CD4-positive, alpha-beta memory T cell (primary cell): ENCODE measurements at regions of chr20 and their contacts with region 1.

Region 1: DNA sequence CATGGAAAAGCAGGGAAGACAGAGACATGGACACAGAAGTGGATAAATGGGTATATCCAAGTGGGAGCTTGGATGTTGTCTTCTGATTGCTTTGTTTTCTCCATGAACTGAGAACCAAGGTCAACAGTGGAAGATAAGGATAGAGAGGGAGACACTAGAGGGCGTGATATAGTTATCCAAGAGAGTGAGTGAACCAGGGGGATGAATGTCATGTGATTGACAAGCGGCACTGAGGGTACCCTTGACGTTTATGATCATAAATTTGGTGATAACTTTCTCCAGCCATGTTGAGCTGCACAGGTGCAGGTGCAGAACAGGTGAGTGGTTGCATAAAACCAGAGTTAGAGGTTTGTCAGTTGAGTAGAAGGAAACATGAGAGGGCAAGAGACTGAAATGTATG is 20.7 kb downstream of the EBF4 start:
- DNase-seq: peak in 4 of 5 donors; percentile 43 to 54 (median 49)
- H3K4me3 ChIP-seq: no peak overlapping the region
- H3K4me3 Mint-ChIP-seq: no peak overlapping the region
- H3K27ac ChIP-seq: no peak overlapping the region
- H3K27ac Mint-ChIP-seq: no peak overlapping the region
- H3K4me1 ChIP-seq: no peaks in the 10 kb centered on the region
- H3K4me1 Mint-ChIP-seq: no peaks in the 10 kb centered on the region
- H3K27me3 ChIP-seq: no peaks in the 10 kb centered on the region
- H3K27me3 Mint-ChIP-seq: no peaks in the 10 kb centered on the region

Region 2: DNA sequence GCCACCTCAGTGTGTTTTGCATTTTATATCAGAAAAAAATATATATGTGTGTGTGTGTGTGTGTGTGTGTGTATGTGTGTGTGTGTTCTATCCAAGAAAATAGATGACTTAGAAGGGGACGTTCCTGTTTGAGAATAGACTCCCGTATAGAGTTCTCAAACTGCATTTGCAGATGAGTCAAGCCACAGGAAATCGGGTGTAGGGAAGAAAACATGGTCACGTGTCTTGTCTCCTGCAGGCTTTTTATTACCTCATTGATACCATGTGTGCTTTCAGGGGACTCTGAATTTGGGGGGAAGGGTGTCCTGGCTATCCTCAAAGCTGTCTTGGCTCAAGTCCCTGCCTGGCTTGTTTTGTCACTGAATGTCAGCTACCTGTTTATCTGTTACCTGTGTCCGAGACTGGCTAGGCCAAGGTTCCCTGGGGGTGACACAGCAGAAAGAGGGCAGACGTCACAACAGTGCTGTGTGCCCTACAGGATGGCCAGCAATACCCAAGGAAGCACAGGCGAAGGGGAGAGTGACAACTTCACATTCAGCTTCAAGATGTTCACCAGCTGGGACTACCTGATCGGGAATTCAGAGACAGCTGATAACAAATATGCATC is 116.5 kb before region 1 on chr20:
- CTCF ChIA-PET with region 1: no interaction called
- POLR2A ChIA-PET with region 1: no interaction called
- intact Hi-C with region 1: no loop called
- DNase-seq: no peak
- H3K4me3 ChIP-seq: no peak overlapping the region
- H3K4me3 Mint-ChIP-seq: no peak overlapping the region
- H3K27ac ChIP-seq: no peak overlapping the region
- H3K27ac Mint-ChIP-seq: no peak overlapping the region
- H3K4me1 ChIP-seq: no peaks in the 10 kb centered on the region
- H3K4me1 Mint-ChIP-seq: no peaks in the 10 kb centered on the region
- H3K27me3 ChIP-seq: peaks cover 4% of the 10 kb centered on the region
- H3K27me3 Mint-ChIP-seq: peaks cover 15 to 32% of the 10 kb centered on the region in 2 donors

Region 3: DNA sequence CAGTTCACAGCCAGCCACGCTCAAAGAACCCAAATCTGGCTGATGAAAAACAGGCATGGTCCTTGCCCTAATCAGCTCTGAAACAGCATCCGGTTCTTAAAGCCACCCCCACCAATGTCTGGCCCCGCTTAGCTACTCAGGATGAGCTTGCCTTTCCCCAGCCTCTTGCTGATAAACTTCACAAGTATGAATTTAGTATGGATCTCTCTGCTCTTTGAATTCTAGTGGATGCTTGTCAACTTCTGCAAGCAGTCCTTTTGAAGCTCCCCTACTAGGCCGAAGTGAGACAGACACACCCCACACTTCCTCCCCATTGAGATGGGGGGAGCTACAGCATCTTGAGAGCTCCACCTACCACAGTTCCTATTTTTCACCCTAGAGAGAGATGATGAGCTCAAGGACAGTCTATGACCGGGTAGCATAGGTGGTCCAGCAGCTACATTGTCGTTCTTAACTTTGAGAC is 16.0 kb after region 1 on chr20:
- CTCF ChIA-PET with region 1: interaction called, 359 read pairs
- POLR2A ChIA-PET with region 1: interaction called, 19 read pairs
- intact Hi-C with region 1: loop called (anchors 1 kb)
- DNase-seq: peak; percentile 52 to 65 (median 58)
- H3K4me3 ChIP-seq: peak overlapping the region in 1 of 2 donors; percentile 0
- H3K4me3 Mint-ChIP-seq: peak overlapping the region; percentile 59 to 86 (median 71)
- H3K27ac ChIP-seq: peak overlapping the region; percentile 33
- H3K27ac Mint-ChIP-seq: peak overlapping the region; percentile 82 to 96 (median 95)
- H3K4me1 ChIP-seq: peaks cover 26% of the 10 kb centered on the region
- H3K4me1 Mint-ChIP-seq: peaks cover 10 to 31% (median 22%) of the 10 kb centered on the region in 4 donors
- H3K27me3 ChIP-seq: no peaks in the 10 kb centered on the region
- H3K27me3 Mint-ChIP-seq: peaks cover 0 to under 1% of the 10 kb centered on the region in 2 donors

Region 4: GRCh38 chr20:2742934-2743559 is 29.8 kb after region 1 on chr20:
- CTCF ChIA-PET with region 1: interaction called, 359 read pairs
- POLR2A ChIA-PET with region 1: interaction called, 19 read pairs
- intact Hi-C with region 1: loop called (anchors 1 kb)
- DNase-seq: peak; percentile 68 to 80 (median 74)
- H3K4me3 ChIP-seq: no peak overlapping the region
- H3K4me3 Mint-ChIP-seq: peak overlapping the region; percentile 56 to 94 (median 72)
- H3K27ac ChIP-seq: peak overlapping the region; percentile 42
- H3K27ac Mint-ChIP-seq: peak overlapping the region; percentile 84 to 98 (median 93)
- H3K4me1 ChIP-seq: peaks cover 42% of the 10 kb centered on the region
- H3K4me1 Mint-ChIP-seq: peaks cover 37 to 56% (median 44%) of the 10 kb centered on the region in 4 donors
- H3K27me3 ChIP-seq: no peaks in the 10 kb centered on the region
- H3K27me3 Mint-ChIP-seq: no peaks in the 10 kb centered on the region

Region 5: DNA sequence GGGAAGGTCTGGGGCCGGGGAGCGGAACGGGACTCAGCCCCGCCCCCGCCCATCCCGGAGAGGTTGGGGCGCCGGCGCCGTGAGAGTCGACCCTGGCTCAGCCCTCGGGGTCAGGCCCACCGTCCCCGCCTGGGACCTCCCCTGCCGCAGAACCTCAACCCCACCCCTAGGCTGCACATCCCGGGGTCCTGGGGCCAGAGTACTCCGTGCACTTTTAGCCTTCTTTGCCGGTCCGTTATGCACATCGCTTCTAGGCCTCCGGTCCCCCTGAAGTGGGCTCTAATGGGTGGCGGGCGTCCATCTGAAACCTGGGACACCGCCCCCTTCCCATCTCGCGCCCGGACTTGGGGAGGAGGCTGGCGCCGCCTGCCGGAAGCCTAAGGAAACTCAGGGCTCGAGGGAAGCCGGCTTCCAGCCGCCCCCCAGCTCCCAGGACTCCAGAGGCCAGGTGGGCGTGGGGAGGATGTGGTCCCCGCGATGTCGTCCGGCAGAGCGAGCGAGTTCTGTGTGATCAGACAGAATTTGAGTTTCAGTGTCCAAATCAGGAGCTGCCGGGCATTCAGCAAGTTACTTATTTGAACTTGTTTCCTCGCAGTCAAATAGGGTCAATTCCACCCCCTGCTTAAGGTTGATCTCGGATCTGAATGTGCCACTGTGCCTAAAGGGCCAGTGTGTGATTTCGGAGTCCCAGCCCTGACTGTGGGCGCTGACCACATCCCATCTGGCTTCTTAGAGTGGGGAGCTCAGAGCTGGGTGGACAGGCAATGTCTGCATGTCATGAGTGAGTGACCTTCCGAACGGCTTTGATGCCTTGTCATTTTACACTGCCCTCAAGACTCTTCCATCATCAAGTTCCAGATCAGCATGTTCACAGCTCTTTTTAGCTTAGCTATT is 39.5 kb after region 1 on chr20:
- CTCF ChIA-PET with region 1: interaction called, 47 read pairs
- POLR2A ChIA-PET with region 1: interaction called, 10 read pairs
- intact Hi-C with region 1: loop called (anchors 1 kb)
- DNase-seq: peak in 4 of 5 donors; percentile 48 to 55 (median 52)
- H3K4me3 ChIP-seq: peak overlapping the region; percentile 28 to 33
- H3K4me3 Mint-ChIP-seq: peak overlapping the region; percentile 81 to 89 (median 86)
- H3K27ac ChIP-seq: no peak overlapping the region
- H3K27ac Mint-ChIP-seq: peak overlapping the region; percentile 57 to 90 (median 74)
- H3K4me1 ChIP-seq: peaks cover 27% of the 10 kb centered on the region
- H3K4me1 Mint-ChIP-seq: peaks cover 16 to 40% (median 28%) of the 10 kb centered on the region in 4 donors
- H3K27me3 ChIP-seq: peaks cover 5% of the 10 kb centered on the region
- H3K27me3 Mint-ChIP-seq: peaks cover 2 to 9% of the 10 kb centered on the region in 2 donors

Region 6: GRCh38 chr20:2775139-2775538 is 61.9 kb after region 1 on chr20:
- CTCF ChIA-PET with region 1: no interaction called
- POLR2A ChIA-PET with region 1: no interaction called
- intact Hi-C with region 1: no loop called
- DNase-seq: no peak
- H3K4me3 ChIP-seq: no peak overlapping the region
- H3K4me3 Mint-ChIP-seq: no peak overlapping the region
- H3K27ac ChIP-seq: no peak overlapping the region
- H3K27ac Mint-ChIP-seq: no peak overlapping the region
- H3K4me1 ChIP-seq: no peaks in the 10 kb centered on the region
- H3K4me1 Mint-ChIP-seq: peaks cover 0 to 5% (median 0%) of the 10 kb centered on the region in 4 donors
- H3K27me3 ChIP-seq: no peaks in the 10 kb centered on the region
- H3K27me3 Mint-ChIP-seq: peaks cover 5 to 14% of the 10 kb centered on the region in 2 donors

Region 7: DNA sequence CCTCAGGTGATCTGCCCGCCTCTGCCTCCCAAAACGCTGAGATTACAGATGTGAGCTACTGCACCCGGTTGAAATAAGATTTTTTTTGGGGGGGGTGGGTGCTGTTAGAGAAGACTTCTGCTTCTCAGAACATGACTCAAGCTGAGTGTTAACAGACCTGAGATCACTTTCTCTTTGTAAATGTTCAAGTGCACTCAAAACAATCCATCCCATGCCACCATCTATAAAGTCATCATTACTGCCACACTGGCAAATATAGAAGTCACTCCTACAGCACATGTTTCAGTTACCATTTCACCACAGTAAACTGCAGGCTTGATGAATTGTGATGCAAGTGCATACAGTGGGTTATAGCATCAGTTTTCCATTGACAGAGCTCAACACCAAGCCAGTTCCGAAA is 136.2 kb after region 1 on chr20:
- CTCF ChIA-PET with region 1: interaction called, 11 read pairs
- POLR2A ChIA-PET with region 1: interaction called, 4 read pairs
- intact Hi-C with region 1: loop called (anchors 1 kb)
- DNase-seq: no peak
- H3K4me3 ChIP-seq: no peak overlapping the region
- H3K4me3 Mint-ChIP-seq: no peak overlapping the region
- H3K27ac ChIP-seq: no peak overlapping the region
- H3K27ac Mint-ChIP-seq: no peak overlapping the region
- H3K4me1 ChIP-seq: peaks cover 13% of the 10 kb centered on the region
- H3K4me1 Mint-ChIP-seq: peaks cover 19 to 43% (median 27%) of the 10 kb centered on the region in 4 donors
- H3K27me3 ChIP-seq: no peaks in the 10 kb centered on the region
- H3K27me3 Mint-ChIP-seq: no peaks in the 10 kb centered on the region

Region 8: DNA sequence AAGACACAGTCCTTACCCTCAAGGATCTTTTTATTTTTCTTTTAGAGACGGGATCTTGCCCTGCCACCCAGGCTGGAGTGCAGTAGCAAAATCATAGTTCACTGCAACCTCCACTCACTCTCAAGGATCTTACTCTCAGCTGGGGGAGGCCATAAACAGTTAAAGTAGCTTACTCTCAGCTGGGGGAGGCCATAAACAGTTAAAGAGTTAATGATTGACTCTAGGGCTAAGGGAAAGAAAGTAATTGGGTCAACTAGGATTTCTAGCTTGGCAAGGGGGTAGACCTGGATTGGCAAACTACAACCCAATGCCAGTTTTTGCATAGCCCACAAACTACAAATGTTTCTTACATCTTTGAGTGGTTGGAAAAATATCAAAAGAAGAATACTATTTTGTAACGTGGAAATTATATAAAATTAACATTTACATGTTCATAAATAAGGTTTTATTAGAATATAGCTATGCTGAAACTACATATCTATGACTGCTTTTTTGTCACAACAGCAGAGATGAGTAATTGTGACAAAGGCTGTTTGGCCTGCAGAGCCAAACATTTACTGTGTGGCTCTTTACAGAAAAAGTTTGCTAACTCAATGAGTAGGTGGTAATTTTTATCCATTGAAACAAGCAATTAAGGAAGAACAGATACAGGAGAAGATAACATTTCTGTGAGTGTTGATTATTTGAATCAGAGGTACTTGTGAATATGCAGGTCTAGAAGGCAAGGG is 206.4 kb after region 1 on chr20:
- CTCF ChIA-PET with region 1: no interaction called
- POLR2A ChIA-PET with region 1: no interaction called
- intact Hi-C with region 1: no loop called
- DNase-seq: no peak
- H3K4me3 ChIP-seq: no peak overlapping the region
- H3K4me3 Mint-ChIP-seq: no peak overlapping the region
- H3K27ac ChIP-seq: no peak overlapping the region
- H3K27ac Mint-ChIP-seq: peak overlapping the region in 1 of 7 donors; percentile 66
- H3K4me1 ChIP-seq: no peaks in the 10 kb centered on the region
- H3K4me1 Mint-ChIP-seq: peaks cover 20 to 37% (median 21%) of the 10 kb centered on the region in 4 donors
- H3K27me3 ChIP-seq: no peaks in the 10 kb centered on the region
- H3K27me3 Mint-ChIP-seq: no peaks in the 10 kb centered on the region

Region 9: GRCh38 chr20:3000852-3001523 is 287.7 kb after region 1 on chr20:
- CTCF ChIA-PET with region 1: no interaction called
- POLR2A ChIA-PET with region 1: no interaction called
- intact Hi-C with region 1: loop called (anchors 1 kb)
- DNase-seq: peak; percentile 15 to 60 (median 45)
- H3K4me3 ChIP-seq: no peak overlapping the region
- H3K4me3 Mint-ChIP-seq: no peak overlapping the region
- H3K27ac ChIP-seq: no peak overlapping the region
- H3K27ac Mint-ChIP-seq: peak overlapping the region in 1 of 7 donors; percentile 53
- H3K4me1 ChIP-seq: no peaks in the 10 kb centered on the region
- H3K4me1 Mint-ChIP-seq: peaks cover 0 to 4% (median 2%) of the 10 kb centered on the region in 4 donors
- H3K27me3 ChIP-seq: no peaks in the 10 kb centered on the region
- H3K27me3 Mint-ChIP-seq: no peaks in the 10 kb centered on the region